Activated naive CD4-positive, alpha-beta T cell treated with anti-CD3 and anti-CD28 coated beads for 36 hours (primary cell): ENCODE measurements at regions of chr16 and their contacts with region 1.

Region 1: DNA sequence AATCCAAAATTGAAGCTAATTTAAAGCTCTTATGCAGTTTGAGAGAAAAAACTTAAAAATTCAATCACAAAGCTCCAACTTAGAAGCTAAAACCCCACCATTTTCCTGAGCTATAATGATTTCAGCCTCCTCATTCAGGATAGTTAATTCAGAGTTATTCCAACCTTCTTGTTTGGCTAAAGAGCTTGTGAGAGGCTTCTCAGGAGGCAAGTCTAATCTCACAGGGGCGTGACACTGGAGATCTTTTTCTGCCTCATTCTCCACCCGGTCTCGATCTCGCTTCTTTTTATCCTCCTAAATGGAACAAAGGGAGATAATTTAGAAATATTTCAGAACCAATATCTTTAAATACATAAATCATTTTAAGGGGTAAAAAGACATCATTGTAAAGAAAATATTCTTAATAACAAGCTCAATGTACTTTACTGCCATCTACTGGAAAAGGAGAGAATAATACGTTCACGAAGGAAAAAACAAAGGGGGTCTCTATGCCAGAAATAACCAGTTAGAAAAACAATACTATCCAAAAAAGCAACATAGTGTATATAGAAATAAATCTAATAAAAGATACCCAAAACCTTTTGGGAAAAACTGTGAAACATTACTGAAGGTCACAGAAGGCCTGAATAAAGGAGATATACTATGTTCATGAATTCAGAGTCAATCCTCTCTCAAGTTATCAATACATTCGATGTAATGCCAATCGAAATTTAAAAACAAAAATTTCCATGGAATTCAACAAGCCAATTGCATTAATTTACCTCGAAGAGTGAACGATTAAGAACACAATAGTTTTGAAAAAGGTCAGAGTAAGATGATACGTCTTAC is 13.9 kb downstream of the BRD7 start:
- DNase-seq: no peak
- H3K4me3 Mint-ChIP-seq: no peak overlapping the region
- H3K27ac Mint-ChIP-seq: no peak overlapping the region
- H3K4me1 Mint-ChIP-seq: peaks cover 25% of the 10 kb centered on the region
- H3K27me3 Mint-ChIP-seq: no peaks in the 10 kb centered on the region

Region 2: DNA sequence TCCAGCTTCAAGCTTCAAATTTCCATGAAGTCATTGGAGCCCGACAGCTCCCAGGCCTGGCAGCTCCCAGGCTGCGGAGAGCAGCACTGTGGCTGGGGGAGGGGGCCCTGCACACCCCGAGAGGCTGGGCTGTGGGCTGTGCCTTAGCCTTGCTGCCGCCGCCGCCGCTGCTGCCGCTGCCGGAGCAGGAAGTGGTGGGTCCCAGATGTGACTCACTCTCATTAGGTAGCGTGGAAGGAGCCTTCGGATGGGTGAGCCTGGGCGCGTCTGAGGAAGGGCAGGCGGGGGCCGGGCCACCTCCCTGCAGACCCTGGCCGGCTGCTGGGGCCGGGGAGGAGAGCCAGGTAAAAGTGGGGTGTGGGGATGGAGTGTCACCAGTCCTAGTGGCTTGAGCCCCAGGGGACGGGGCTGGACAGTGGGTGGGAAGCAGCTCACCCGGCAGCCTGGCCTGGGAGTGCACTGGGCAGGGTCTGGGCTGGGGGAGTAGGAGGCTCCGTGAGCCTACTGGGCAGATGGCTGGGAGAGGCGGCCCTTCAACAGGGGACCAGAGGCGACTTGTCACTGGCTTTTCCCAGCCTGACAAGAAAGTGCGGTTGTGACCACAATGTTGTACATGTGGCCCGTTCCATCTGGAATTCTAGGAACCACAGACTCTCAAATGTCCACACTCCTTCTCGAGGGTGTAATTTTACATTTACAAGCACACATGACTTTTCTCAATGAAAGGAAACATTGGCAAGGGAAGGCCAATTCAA is 88.3 kb before region 1 on chr16 and contains the start of gene ADCY7:
- CTCF ChIA-PET with region 1: interaction called, 6 read pairs
- intact Hi-C with region 1: loop called (anchors 1 kb)
- DNase-seq: peak; percentile 91
- H3K4me3 Mint-ChIP-seq: peak within 1 kb of the TSS; percentile 86
- H3K27ac Mint-ChIP-seq: peak within 1 kb of the TSS; percentile 94
- H3K4me1 Mint-ChIP-seq: peaks cover 60% of the 10 kb centered on the region
- H3K27me3 Mint-ChIP-seq: peaks cover 3% of the 10 kb centered on the region
- total RNA-seq, gene ADCY7: 73.4 to 89.6 TPM

Region 3: DNA sequence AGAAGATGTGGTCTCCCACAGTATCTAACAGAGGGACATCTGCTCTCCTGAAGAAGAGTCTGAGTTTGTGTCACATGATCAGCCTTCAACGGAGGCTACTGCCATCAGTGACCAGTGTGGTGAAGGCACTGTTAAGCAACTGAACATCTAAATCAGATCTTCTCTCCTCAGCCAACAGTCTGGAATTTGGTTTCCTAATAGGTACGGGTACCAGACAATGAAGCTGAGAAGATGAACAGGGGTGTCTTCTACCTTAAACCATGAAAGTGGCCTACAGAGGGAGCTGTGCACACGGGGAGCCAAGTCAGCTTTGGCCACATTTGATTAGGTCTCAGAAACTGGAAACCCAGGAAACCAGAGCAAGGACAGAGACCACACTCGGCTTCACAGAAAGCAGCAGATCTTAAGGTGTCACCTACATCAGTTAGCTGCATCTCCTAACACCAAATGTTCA is 27.9 kb before region 1 on chr16:
- CTCF ChIA-PET with region 1: interaction called, 149 read pairs
- intact Hi-C with region 1: loop called (anchors 1 kb)
- DNase-seq: peak; percentile 81
- H3K4me3 Mint-ChIP-seq: no peak overlapping the region
- H3K27ac Mint-ChIP-seq: peak overlapping the region; percentile 50
- H3K4me1 Mint-ChIP-seq: peaks cover 56% of the 10 kb centered on the region
- H3K27me3 Mint-ChIP-seq: no peaks in the 10 kb centered on the region

Region 4: GRCh38 chr16:50340578-50340977 is 14.3 kb before region 1 on chr16:
- CTCF ChIA-PET with region 1: interaction called, 16 read pairs
- intact Hi-C with region 1: loop called (anchors 1 kb)
- DNase-seq: no peak
- H3K4me3 Mint-ChIP-seq: no peak overlapping the region
- H3K27ac Mint-ChIP-seq: no peak overlapping the region
- H3K4me1 Mint-ChIP-seq: peaks cover 41% of the 10 kb centered on the region
- H3K27me3 Mint-ChIP-seq: no peaks in the 10 kb centered on the region

Region 5: GRCh38 chr16:50368410-50369132 is 13.7 kb after region 1 on chr16 and contains the start of gene BRD7:
- CTCF ChIA-PET with region 1: interaction called, 22 read pairs
- intact Hi-C with region 1: no loop called
- DNase-seq: peak; percentile 62
- H3K4me3 Mint-ChIP-seq: peak within 1 kb of the TSS; percentile 96
- H3K27ac Mint-ChIP-seq: peak within 1 kb of the TSS; percentile 86
- H3K4me1 Mint-ChIP-seq: peaks cover 46% of the 10 kb centered on the region
- H3K27me3 Mint-ChIP-seq: no peaks in the 10 kb centered on the region
- total RNA-seq, gene BRD7: 96.7 to 101 TPM

Region 6: DNA sequence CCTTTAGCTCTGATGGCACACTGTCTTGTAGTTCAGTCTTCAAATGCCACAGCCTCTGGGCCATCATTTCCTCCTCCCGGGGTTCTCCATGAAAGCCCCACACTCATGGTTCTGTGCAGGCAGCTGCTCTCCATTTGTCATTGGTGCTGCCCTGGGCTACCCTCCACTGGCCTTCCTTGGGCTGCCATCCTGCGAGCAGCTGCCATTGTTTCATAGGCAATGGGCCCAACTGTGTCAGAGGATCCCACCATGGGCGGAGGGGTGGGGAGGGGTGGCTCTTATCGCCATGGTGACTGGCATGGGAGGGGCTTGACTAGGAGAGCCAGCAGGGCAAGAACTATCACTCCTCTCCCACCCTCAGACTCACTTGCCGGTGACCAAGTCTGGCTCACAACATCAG is 52.5 kb after region 1 on chr16:
- CTCF ChIA-PET with region 1: no interaction called
- intact Hi-C with region 1: no loop called
- DNase-seq: no peak
- H3K4me3 Mint-ChIP-seq: no peak overlapping the region
- H3K27ac Mint-ChIP-seq: no peak overlapping the region
- H3K4me1 Mint-ChIP-seq: no peaks in the 10 kb centered on the region
- H3K27me3 Mint-ChIP-seq: no peaks in the 10 kb centered on the region